ENCODE measurements at regions of chr5 and their contacts with region 1.

Region 1: DNA sequence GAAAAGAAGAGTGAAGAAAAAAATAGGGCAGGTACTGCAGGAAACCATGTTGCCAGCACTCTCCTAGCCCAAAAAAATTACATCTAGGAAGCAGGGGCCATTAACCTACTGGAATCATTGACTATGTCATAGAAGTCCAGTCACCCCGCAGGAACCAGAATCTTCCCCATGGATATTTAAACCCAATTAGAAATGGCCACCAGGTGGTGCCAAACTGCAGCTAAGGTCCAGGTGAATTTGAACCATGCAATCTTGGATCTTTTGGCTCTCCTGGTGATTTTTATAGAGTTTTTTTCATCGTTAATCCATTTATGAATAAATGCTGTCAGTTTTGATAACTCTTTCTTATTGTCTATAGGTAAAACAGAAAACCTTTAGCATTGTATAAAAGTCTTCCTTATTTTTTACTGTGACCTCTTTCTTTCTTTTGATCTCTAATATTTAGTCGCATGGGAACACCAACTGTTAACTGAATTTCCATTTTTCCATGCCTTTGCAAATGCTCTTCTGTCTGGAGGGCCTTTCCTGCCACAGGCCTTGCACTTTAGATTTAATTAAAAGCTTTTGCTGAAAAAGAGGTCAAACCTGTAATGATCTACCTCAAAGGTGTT is 147.5 kb upstream of the FGF10 start:
- DNase-seq: no peak
- H3K4me3 ChIP-seq: no peak overlapping the region
- H3K4me3 Mint-ChIP-seq: no peak overlapping the region
- H3K27ac ChIP-seq: no peak overlapping the region
- H3K27ac Mint-ChIP-seq: no peak overlapping the region
- H3K4me1 ChIP-seq: no peaks in the 10 kb centered on the region
- H3K4me1 Mint-ChIP-seq: no peaks in the 10 kb centered on the region
- H3K27me3 ChIP-seq: no peaks in the 10 kb centered on the region
- H3K27me3 Mint-ChIP-seq: no peaks in the 10 kb centered on the region

Region 2: DNA sequence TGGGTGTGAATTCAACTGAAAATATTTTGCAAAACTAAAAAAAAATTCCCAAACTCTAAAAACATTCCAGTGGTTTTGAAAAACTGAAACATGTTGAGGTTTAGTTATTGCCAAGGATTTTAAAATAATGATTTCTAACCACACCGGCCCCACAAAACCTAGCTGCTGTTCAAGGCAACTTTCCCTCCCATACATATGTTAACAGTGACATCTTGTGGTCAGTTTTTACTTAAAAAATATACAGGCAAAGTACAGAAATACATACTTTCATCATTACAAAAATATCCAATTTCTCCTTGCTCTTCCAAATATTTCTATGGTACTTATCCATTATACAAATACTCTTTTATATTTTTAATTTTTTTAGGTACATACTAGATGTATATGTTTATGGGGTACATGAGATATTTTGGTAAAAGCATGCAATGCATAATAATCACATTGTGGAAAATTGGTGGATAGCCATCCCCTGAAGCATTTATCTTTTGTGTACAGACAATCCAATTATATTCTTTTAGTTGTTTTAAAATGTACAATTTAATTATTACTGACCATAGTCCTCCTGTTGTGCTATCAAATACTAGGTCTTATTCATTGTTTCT is 237.6 kb after region 1 on chr5:
- CTCF ChIA-PET with region 1: no interaction called
- POLR2A ChIA-PET with region 1: no interaction called
- intact Hi-C with region 1: loop called (anchors 2 kb)
- DNase-seq: peak in 4 of 5 donors; percentile 13 to 21 (median 18)
- H3K4me3 ChIP-seq: no peak overlapping the region
- H3K4me3 Mint-ChIP-seq: no peak overlapping the region
- H3K27ac ChIP-seq: no peak overlapping the region
- H3K27ac Mint-ChIP-seq: no peak overlapping the region
- H3K4me1 ChIP-seq: no peaks in the 10 kb centered on the region
- H3K4me1 Mint-ChIP-seq: no peaks in the 10 kb centered on the region
- H3K27me3 ChIP-seq: no peaks in the 10 kb centered on the region
- H3K27me3 Mint-ChIP-seq: peaks cover 6 to 9% of the 10 kb centered on the region in 2 donors

Region 3: DNA sequence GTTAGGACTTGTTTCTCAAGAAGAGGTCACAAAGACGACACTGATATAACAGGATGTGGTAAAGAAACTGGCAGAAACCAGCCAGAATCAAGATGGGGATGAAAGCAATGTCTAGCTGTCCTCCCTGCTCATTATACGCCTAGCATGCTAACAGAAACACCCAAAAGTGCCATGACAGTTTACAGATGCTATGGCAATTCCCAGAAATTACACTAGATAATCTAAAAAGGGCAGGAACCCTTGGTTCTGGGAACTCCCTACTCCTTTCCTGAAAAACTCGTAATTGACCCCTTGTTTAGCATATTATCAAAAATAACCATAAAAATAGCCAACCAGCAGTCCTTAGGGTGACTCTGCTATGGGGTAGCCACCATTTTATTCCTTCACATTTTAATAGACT is 261.1 kb after region 1 on chr5:
- CTCF ChIA-PET with region 1: no interaction called
- POLR2A ChIA-PET with region 1: no interaction called
- intact Hi-C with region 1: no loop called
- DNase-seq: no peak
- H3K4me3 ChIP-seq: no peak overlapping the region
- H3K4me3 Mint-ChIP-seq: no peak overlapping the region
- H3K27ac ChIP-seq: no peak overlapping the region
- H3K27ac Mint-ChIP-seq: no peak overlapping the region
- H3K4me1 ChIP-seq: no peaks in the 10 kb centered on the region
- H3K4me1 Mint-ChIP-seq: no peaks in the 10 kb centered on the region
- H3K27me3 ChIP-seq: no peaks in the 10 kb centered on the region
- H3K27me3 Mint-ChIP-seq: peaks cover 1 to 2% of the 10 kb centered on the region in 2 donors

Measured in CD4-positive, alpha-beta memory T cell (primary cell).